ENCODE measurements at regions of chr10 and their contacts with region 1.

Region 1: GRCh38 chr10:30127120-30127541 is 67.7 kb upstream of the JCAD start:
- DNase-seq: no peak
- ATAC-seq: no peak
- H3K4me3 ChIP-seq: no peak overlapping the region
- H3K4me3 Mint-ChIP-seq: no peak overlapping the region
- H3K27ac ChIP-seq: no peak overlapping the region
- H3K27ac Mint-ChIP-seq: peak overlapping the region in 1 of 2 donors; percentile 10
- H3K4me1 ChIP-seq: no peaks in the 10 kb centered on the region
- H3K4me1 Mint-ChIP-seq: no peaks in the 10 kb centered on the region
- H3K27me3 ChIP-seq: peaks cover 0 to 8% of the 10 kb centered on the region in 2 experiments
- H3K27me3 Mint-ChIP-seq: peaks cover 3 to 28% of the 10 kb centered on the region in 2 donors

Region 2: GRCh38 chr10:29658984-29659965 is 467.9 kb before region 1 on chr10:
- CTCF ChIA-PET with region 1: no interaction called
- POLR2A ChIA-PET with region 1: no interaction called
- DNase-seq: peak; percentile 14 to 89 (median 55)
- ATAC-seq: peak; percentile 95 to 99 (median 98)
- H3K4me3 ChIP-seq: no peak overlapping the region
- H3K4me3 Mint-ChIP-seq: peak overlapping the region; percentile 61 to 64 (median 63)
- H3K27ac ChIP-seq: peak overlapping the region; percentile 75
- H3K27ac Mint-ChIP-seq: peak overlapping the region; percentile 72 to 90
- H3K4me1 ChIP-seq: peaks cover 6 to 31% of the 10 kb centered on the region in 2 experiments
- H3K4me1 Mint-ChIP-seq: peaks cover 30 to 48% (median 31%) of the 10 kb centered on the region in 3 donors
- H3K27me3 ChIP-seq: no peaks in the 10 kb centered on the region
- H3K27me3 Mint-ChIP-seq: no peaks in the 10 kb centered on the region

Region 3: GRCh38 chr10:30059209-30060107 is 67.7 kb before region 1 on chr10 and contains the start of gene JCAD:
- CTCF ChIA-PET with region 1: no interaction called
- POLR2A ChIA-PET with region 1: no interaction called
- DNase-seq: peak in 29 of 35 experiments; percentile 8 to 53 (median 32)
- ATAC-seq: peak; percentile 69 to 88 (median 76)
- H3K4me3 ChIP-seq: peak within 1 kb of the TSS; percentile 18 to 36
- H3K4me3 Mint-ChIP-seq: peak within 1 kb of the TSS; percentile 53 to 70 (median 69)
- H3K27ac ChIP-seq: no peak within 1 kb of the TSS
- H3K27ac Mint-ChIP-seq: peak within 1 kb of the TSS in 1 of 2 donors; percentile 25
- H3K4me1 ChIP-seq: peaks cover 0 to 13% of the 10 kb centered on the region in 2 experiments
- H3K4me1 Mint-ChIP-seq: peaks cover 8 to 14% (median 14%) of the 10 kb centered on the region in 3 donors
- H3K27me3 ChIP-seq: peaks cover 0 to 53% of the 10 kb centered on the region in 2 experiments
- H3K27me3 Mint-ChIP-seq: peaks cover 73 to 77% of the 10 kb centered on the region in 2 donors
- total RNA-seq, gene JCAD: 0.06 to 0.32 (median 0.10) TPM in 3 of 5 donors, not detected in the others

Region 4: DNA sequence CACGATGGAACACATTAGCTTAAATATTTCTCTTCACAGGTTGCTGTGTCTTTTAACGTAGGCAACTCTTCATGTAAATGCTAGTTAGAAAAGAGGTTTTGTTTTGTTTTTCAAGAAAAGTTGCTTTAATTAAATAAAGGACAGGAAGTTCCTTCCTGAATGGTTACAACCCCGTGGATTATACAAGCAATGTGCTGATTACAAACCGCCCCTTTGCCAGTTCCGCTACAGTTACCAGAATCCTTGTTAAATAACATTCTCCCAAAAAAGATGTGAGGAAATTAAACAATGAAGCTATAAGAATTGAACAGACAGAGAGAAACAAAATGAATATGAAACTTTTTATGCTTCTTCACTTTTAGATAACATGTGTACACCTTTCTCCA is 427.3 kb after region 1 on chr10:
- CTCF ChIA-PET with region 1: interaction called in 1 of 2 experiments, 10 read pairs
- POLR2A ChIA-PET with region 1: no interaction called
- DNase-seq: no peak
- ATAC-seq: no peak
- H3K4me3 ChIP-seq: no peak overlapping the region
- H3K4me3 Mint-ChIP-seq: no peak overlapping the region
- H3K27ac ChIP-seq: no peak overlapping the region
- H3K27ac Mint-ChIP-seq: no peak overlapping the region
- H3K4me1 ChIP-seq: peaks cover 0 to 3% of the 10 kb centered on the region in 2 experiments
- H3K4me1 Mint-ChIP-seq: peaks cover 0 to 10% (median 0%) of the 10 kb centered on the region in 3 donors
- H3K27me3 ChIP-seq: no peaks in the 10 kb centered on the region
- H3K27me3 Mint-ChIP-seq: no peaks in the 10 kb centered on the region